Panc1 (cell line): ENCODE measurements at regions of chr7 and their contacts with region 1.

Region 1: GRCh38 chr7:43799589-43799988 is 41.1 kb downstream of the BLVRA start:
- DNase-seq: no peak
- ATAC-seq: peak; percentile 66
- H3K4me3 ChIP-seq: no peak overlapping the region
- H3K27ac ChIP-seq: no peak overlapping the region
- H3K4me1 ChIP-seq: no peaks in the 10 kb centered on the region
- H3K27me3 ChIP-seq: no peaks in the 10 kb centered on the region
- CTCF ChIP-seq: no peak

Region 2: DNA sequence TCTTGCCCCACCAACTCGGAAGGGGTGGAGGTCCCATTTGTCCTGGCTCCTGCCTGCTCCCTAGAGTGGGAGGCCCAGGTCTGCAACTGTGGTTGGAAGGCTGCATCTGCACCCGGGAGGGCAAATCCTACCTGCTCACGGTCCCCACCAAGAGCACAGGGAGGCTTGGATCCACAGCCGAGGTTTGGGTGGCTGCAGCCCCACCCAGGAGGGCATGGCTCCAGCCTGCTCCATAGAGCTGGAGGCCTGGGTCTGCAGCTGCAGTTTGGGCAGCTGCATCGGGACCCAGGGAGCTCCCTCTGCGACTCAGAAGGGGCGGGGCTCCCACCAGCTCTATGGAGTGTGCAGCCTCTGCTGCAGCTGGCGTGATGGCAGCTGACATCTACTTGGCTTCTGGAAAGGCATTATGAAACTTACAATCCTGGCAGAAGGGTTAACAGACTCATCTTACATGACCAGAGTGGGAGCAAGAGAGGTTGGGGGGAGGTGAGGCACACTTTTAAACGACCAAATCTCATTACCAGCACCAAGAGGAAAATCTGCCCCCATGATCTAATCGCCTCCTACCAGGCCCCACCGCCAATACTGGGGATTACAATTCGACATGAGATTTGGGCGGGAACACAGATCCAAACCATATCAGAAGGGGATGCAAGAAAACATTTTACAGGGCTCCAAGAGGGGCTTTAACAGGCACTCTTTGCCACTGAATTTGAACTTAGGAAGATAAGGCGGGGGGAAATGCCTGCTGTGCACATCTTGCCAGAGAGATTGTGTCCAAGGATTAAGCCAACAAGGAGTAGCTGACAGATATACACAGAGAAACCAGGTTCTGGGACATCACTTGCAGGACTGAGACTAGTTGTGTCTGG is 49.3 kb before region 1 on chr7:
- CTCF ChIA-PET with region 1: no interaction called
- POLR2A ChIA-PET with region 1: interaction called, 18 read pairs
- in situ Hi-C with region 1: no loop called
- intact Hi-C with region 1: no loop called
- DNase-seq: no peak
- ATAC-seq: no peak
- H3K4me3 ChIP-seq: no peak overlapping the region
- H3K27ac ChIP-seq: no peak overlapping the region
- H3K4me1 ChIP-seq: no peaks in the 10 kb centered on the region
- H3K27me3 ChIP-seq: no peaks in the 10 kb centered on the region
- CTCF ChIP-seq: no peak

Region 3: DNA sequence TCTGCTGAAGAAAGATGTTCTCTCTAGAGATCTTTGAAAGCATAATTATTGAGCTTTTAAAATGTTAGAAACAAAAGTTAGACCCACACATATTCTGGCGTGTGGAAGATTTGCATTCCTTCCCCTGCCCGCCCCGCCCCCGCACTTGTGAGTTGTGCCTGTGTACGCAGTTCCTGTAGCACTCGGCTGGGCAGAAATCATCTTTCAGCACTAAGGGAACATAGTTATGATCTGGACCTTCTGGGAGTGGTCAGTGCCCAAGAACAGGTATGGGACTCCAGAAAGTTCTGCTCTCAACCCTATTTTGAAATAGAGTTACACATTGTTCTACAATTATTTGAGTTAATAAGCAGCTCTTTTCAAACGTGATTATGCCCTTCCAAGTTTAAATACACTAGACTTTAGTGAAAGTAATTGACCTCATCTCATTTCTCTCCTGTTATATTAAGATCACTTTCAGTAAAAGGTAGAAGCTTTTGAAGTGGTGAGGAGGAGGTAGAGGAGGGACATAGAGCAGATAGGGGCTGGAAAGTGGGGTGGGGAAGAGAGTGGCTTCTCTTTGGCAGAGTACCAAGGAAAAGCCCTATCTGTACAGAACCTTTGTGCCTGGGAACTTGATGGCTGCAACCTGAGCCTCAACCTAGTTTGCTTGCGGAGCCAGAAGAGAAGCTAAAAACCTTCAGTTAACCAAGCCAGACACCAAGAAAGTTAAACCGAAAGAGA is 35.4 kb before region 1 on chr7:
- CTCF ChIA-PET with region 1: no interaction called
- POLR2A ChIA-PET with region 1: no interaction called
- in situ Hi-C with region 1: no loop called
- intact Hi-C with region 1: no loop called
- DNase-seq: no peak
- ATAC-seq: peak; percentile 69
- H3K4me3 ChIP-seq: peak overlapping the region in 1 of 2 experiments; percentile 49; a peak in 3 of 4 replicates
- H3K27ac ChIP-seq: peak overlapping the region; percentile 40
- H3K4me1 ChIP-seq: peaks cover 55% of the 10 kb centered on the region
- H3K27me3 ChIP-seq: no peaks in the 10 kb centered on the region
- CTCF ChIP-seq: no peak